Head of caudate nucleus (tissue), 42 donors: ENCODE measurements at regions of chr11 and their contacts with region 1.

Region 1: GRCh38 chr11:125568970-125569914 is at the start of gene EI24:
- DNase-seq: peak; percentile 79 to 97 (median 94)

Region 2: DNA sequence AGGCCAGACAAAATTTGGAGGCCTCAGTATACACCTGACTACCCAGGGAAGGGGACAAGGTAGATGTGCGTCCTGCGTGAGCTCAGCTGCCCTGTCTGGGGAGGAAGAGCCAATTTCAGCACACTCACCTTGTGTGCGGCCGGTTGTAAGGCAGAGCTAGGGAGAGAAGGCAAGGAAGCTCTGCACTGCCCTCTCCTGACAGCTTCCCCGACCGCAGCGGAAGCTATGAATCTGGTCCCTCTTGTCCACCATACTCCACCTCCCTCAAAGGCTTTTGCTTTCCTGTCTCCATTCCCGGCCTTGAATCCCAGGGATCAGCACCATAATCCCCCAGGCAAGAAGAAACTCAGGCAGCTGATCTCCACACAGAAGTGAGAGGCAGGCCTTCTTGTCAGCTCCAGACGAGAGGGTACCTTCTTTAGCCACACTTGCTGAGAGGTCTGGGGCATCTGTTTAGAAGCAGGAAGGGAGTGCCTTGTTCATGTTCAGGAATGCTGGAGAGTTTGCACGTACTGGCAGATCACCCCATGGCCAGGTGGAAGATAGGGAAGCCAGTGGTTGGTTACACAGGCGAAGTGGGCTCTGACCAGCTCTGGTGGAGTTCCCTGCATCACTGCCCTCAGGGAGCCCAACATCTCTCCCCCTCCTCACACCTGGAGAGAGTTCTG is 135.7 kb before region 1 on chr11:
- intact Hi-C with region 1: loop called (anchors 10 kb)
- DNase-seq: peak; percentile 39 to 89 (median 71)

Region 3: DNA sequence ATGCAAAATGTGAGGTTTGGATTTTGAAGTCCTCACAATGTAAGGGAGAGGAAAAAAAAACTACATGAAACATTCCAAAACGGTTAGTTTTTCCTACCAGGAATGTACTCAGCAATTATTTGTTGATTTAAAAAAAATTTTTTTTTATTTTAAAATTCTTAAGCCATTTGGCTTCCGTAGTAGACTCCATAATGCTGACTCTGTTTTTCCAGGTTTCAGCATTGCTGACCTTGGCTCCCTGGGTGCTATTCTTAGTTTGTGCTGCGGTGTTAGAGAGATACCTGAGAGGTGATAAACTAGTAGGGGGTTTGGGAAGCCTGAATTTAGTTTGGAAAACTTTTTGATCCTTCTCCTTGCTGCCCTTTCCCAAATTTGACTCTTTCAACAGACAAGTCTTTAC is 34.0 kb after region 1 on chr11:
- intact Hi-C with region 1: no loop called
- DNase-seq: no peak